ENCODE measurements at regions of chr12 and their contacts with region 1.

Region 1: DNA sequence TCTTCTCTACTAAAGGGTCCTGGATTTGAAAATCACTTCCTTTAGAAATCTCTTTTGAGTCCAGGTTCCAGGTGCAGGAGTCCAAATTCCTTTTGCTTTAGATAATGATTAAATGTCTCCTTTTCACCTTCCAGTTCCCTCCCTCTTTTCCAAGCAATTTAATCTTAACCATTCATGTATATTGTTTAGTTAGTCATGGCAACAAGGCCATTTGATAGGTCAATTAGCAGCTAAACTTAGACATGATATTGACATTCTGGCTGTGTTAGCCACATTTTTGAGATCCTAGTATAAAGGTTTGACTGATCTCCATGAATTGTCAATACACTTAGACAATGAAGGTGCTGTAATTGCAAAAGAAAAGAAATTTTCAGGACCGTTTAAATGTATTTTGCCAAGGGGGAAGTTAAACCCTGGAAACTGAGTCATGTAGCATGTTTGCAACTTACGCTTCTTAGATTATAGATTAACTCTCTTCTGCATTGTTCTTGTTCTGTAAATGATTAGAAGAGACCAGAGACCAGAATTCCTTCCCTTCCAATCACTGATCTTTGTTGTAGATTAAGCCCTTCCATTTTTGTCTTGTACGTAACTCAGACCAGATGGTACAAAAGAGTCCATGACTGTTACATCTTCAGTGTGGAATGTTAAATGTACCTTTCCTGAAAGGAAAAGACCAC is 12.4 kb upstream of the C12orf75 start:
- DNase-seq: peak; percentile 40
- H3K4me3 Mint-ChIP-seq: peak overlapping the region; percentile 3
- H3K27ac Mint-ChIP-seq: peak overlapping the region; percentile 86
- H3K4me1 Mint-ChIP-seq: peaks cover 68% of the 10 kb centered on the region
- H3K27me3 Mint-ChIP-seq: no peaks in the 10 kb centered on the region
- CTCF ChIP-seq: no peak

Region 2: GRCh38 chr12:105214623-105215382 is 103.3 kb before region 1 on chr12:
- CTCF ChIA-PET with region 1: interaction called, 5 read pairs
- intact Hi-C with region 1: loop called (anchors 1 kb)
- DNase-seq: peak; percentile 90
- H3K4me3 Mint-ChIP-seq: peak overlapping the region; percentile 13
- H3K27ac Mint-ChIP-seq: peak overlapping the region; percentile 68
- H3K4me1 Mint-ChIP-seq: peaks cover 20% of the 10 kb centered on the region
- H3K27me3 Mint-ChIP-seq: no peaks in the 10 kb centered on the region
- CTCF ChIP-seq: no peak

Region 3: GRCh38 chr12:105235732-105236476 is 82.2 kb before region 1 on chr12 and contains the start of gene APPL2:
- CTCF ChIA-PET with region 1: interaction called, 4 read pairs
- intact Hi-C with region 1: loop called (anchors 5 kb)
- DNase-seq: peak; percentile 92
- H3K4me3 Mint-ChIP-seq: peak within 1 kb of the TSS; percentile 80
- H3K27ac Mint-ChIP-seq: peak within 1 kb of the TSS; percentile 72
- H3K4me1 Mint-ChIP-seq: peaks cover 33% of the 10 kb centered on the region
- H3K27me3 Mint-ChIP-seq: no peaks in the 10 kb centered on the region
- CTCF ChIP-seq: peak; percentile 79
- total RNA-seq, gene APPL2: 35.9 and 45.8 TPM in 2 replicates

Region 4: DNA sequence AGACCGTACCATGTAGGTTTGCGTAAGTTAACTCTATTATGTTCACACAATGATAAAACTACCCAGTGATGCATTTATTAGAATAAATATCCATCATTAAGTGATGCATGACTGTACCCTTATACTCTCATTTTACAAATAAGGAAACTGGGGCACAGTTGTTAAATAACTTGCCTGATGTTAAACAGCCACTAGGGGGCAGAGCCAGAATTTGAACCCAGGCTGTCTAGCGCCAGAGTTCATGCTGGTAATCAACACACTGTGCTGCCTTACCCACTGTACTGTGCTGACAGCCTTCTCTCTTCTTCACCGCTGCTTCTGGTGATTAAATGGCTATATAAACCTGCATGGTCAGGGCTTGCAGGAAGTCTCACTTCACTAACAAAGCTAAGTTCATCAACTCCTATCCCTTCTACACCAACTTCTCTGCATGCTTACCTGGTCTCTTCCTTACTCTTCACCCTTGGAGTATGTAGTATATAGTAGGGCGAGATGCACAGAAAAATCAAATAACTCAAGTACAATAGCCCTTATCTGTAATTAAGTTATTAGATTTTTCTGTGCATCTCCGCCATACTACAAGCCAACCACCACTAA is 38.5 kb before region 1 on chr12:
- CTCF ChIA-PET with region 1: no interaction called
- intact Hi-C with region 1: loop called (anchors 2 kb)
- DNase-seq: peak; percentile 48
- H3K4me3 Mint-ChIP-seq: no peak overlapping the region
- H3K27ac Mint-ChIP-seq: no peak overlapping the region
- H3K4me1 Mint-ChIP-seq: peaks cover 47% of the 10 kb centered on the region
- H3K27me3 Mint-ChIP-seq: no peaks in the 10 kb centered on the region
- CTCF ChIP-seq: peak; percentile 69

Region 5: GRCh38 chr12:105374303-105374702 is 56.2 kb after region 1 on chr12:
- CTCF ChIA-PET with region 1: no interaction called
- intact Hi-C with region 1: no loop called
- DNase-seq: no peak
- H3K4me3 Mint-ChIP-seq: no peak overlapping the region
- H3K27ac Mint-ChIP-seq: no peak overlapping the region
- H3K4me1 Mint-ChIP-seq: no peaks in the 10 kb centered on the region
- H3K27me3 Mint-ChIP-seq: no peaks in the 10 kb centered on the region
- CTCF ChIP-seq: no peak

Measured in Calu3 (cell line).